ENCODE measurements at regions of chr12 and their contacts with region 1.

Region 1: DNA sequence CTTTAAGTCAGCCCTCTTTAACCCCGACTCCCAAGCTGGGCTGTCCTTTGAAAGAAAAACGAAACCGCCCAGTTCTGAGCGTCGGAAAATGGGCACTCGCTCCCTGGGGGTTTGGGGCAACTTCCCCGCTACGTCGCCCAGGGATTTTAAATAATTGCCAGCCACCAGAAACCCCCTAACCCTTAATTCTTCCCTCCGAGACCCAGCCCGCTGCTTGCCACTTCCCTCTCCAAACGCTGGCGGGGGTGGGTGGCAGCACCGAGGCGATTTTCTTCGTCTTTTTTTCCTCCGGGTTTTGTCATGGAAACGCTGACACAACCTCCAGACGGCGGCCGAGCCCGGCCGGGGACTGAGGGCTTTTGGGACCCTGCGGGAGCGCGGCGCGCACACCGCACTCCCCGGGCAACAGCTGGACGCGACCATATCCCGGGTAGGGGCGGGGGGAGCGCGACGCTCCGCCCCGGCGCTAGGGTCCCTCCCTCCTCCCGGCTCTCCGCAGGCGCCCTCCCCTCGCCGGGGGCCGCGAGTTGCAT is at the start of gene CHST11:
- DNase-seq: peak; percentile 95 to 98 (median 98)
- H3K4me3 ChIP-seq: peak within 1 kb of the TSS; percentile 75 to 100 (median 99)
- H3K27ac ChIP-seq: peak within 1 kb of the TSS; percentile 81 to 91
- H3K4me1 ChIP-seq: peaks cover 20 to 37% (median 30%) of the 10 kb centered on the region in 4 experiments
- H3K27me3 ChIP-seq: no peaks in the 10 kb centered on the region

Region 2: GRCh38 chr12:104319918-104320626 is 136.4 kb before region 1 on chr12:
- CTCF ChIA-PET with region 1: no interaction called
- POLR2A ChIA-PET with region 1: no interaction called
- DNase-seq: no peak
- H3K4me3 ChIP-seq: no peak overlapping the region
- H3K27ac ChIP-seq: peak overlapping the region in 1 of 2 experiments; percentile 14
- H3K4me1 ChIP-seq: no peaks in the 10 kb centered on the region
- H3K27me3 ChIP-seq: no peaks in the 10 kb centered on the region

Region 3: DNA sequence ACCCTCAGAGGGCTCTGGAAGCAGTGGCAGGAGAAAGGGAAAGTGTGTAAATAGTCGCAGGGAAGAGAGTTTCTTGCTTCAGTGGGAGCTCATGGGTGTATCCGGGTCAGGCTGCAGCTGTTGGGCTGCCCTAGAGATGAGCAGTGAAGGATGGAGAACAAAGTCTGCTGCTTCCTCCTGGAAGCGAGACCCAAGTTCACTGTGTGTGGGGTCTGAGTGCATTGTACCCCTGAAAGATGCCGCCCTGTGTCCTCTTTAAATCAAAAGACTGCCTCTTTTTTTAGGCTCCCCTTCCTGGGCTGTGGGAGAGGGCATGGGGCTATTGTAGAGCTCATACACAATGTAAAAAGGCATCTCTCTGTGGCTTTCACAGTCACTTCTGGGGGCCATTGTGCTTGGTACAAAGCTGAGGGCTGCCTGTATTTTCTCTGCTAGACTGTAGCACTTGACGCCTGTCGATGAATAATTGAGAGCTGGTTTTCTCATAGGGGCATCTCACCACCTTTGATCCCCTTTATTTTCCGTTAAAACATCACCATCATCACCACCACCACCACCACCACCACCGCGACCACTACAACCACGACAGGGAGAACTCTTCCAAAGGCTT is 17.0 kb after region 1 on chr12:
- CTCF ChIA-PET with region 1: interaction called, 23 read pairs
- POLR2A ChIA-PET with region 1: interaction called, 9 read pairs
- DNase-seq: peak in 2 of 3 donors; percentile 58 to 60
- H3K4me3 ChIP-seq: peak overlapping the region in 3 of 7 experiments; percentile 6 to 49 (median 43)
- H3K27ac ChIP-seq: peak overlapping the region in 1 of 2 experiments; percentile 41
- H3K4me1 ChIP-seq: peaks cover 41 to 90% (median 72%) of the 10 kb centered on the region in 4 experiments
- H3K27me3 ChIP-seq: no peaks in the 10 kb centered on the region

Region 4: GRCh38 chr12:104478396-104479122 is 22.1 kb after region 1 on chr12:
- CTCF ChIA-PET with region 1: interaction called, 23 read pairs
- POLR2A ChIA-PET with region 1: interaction called, 9 read pairs
- DNase-seq: peak; percentile 63 to 95 (median 88)
- H3K4me3 ChIP-seq: peak overlapping the region in 6 of 7 experiments; percentile 24 to 65 (median 50)
- H3K27ac ChIP-seq: peak overlapping the region; percentile 2 to 67
- H3K4me1 ChIP-seq: peaks cover 39 to 87% (median 75%) of the 10 kb centered on the region in 4 experiments
- H3K27me3 ChIP-seq: no peaks in the 10 kb centered on the region